CD4-positive, alpha-beta T cell (primary cell): ENCODE measurements at regions of chr5 and their contacts with region 1.

Region 1: DNA sequence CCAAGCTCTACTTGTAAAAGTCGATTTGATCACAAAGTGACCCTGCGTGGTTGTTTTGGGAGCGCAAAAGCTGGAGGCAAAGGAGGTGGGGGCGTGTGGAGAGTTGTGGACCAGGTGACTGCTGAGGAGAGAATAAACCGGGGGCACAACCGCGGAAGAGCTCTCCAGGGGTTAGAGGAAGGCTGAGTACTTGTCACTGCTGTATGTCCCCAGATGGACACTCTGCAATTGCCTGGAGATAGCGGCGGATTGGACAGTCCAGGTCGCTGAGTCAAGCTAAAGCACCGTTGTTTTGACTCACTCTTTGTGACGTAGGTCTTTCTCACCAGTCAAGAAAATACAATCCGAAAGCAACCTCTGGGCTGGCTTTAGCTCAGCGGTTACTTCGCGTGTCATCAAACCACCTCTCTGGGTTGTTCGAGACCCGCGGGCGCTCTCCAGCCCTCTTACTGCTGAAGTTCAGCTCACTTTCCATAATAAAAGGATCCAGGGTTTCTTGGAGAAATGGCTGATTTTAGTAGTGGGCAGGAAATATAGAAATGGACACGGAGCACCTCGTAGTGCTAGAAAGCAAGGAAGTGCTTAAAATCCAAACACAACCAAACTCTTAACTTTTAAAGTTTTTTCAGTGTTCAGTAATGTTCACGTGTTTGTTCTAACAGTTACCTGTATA is 25.7 kb downstream of the ZMAT2 start:
- DNase-seq: peak; percentile 25 to 83 (median 49)
- ATAC-seq: peak; percentile 91
- H3K4me3 ChIP-seq: peak overlapping the region; percentile 17
- H3K4me3 Mint-ChIP-seq: peak overlapping the region; percentile 83
- H3K27ac ChIP-seq: no peak overlapping the region
- H3K27ac Mint-ChIP-seq: peak overlapping the region; percentile 89
- H3K4me1 ChIP-seq: peaks cover 7% of the 10 kb centered on the region
- H3K4me1 Mint-ChIP-seq: peaks cover 16% of the 10 kb centered on the region
- H3K27me3 ChIP-seq: peaks cover 0 to 6% of the 10 kb centered on the region in 2 experiments
- H3K27me3 Mint-ChIP-seq: peaks cover 42% of the 10 kb centered on the region
- CTCF ChIP-seq: no peak

Region 2: DNA sequence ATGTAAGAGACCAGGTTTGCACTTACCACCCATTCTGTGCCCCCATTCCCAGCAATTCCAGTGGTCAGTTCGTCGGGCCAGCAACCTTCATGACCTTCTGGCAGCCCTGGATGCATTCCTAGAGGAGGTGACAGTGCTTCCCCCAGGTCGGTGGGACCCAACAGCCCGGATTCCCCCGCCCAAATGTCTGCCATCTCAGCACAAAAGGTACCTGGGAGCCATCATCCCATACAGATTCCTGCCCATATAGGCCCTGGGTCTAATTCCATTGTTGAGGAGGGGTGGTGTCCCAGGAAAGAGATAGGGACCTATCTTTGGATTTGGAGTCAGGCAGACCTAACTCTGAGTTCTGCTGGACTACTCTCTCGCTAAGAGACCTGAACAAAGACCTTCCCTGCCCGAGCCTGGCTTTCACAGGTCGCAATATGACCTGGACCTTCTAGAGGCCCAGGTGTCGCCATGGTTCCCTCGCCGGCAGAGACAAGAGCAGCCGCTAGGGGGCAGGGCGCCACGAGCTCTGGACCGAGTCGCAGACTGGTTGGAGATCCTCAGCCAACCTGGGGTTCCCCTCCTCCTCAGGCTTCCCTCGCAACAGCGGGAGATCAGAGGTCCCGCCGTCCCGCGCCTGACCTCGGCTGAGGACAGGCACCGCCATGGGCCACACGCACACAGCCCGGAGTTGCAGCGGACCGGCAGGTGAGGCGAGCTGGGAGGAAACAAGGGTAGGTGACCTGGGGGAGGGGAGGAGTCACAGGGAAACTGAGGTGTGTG is 362.9 kb before region 1 on chr5:
- CTCF ChIA-PET with region 1: interaction called, 4 read pairs
- POLR2A ChIA-PET with region 1: no interaction called
- intact Hi-C with region 1: loop called in 1 of 2 experiments (anchors 2 kb)
- DNase-seq: peak; percentile 69 to 89 (median 78)
- ATAC-seq: peak; percentile 97
- H3K4me3 ChIP-seq: peak overlapping the region; percentile 36
- H3K4me3 Mint-ChIP-seq: peak overlapping the region; percentile 63
- H3K27ac ChIP-seq: no peak overlapping the region
- H3K27ac Mint-ChIP-seq: no peak overlapping the region
- H3K4me1 ChIP-seq: peaks cover 12% of the 10 kb centered on the region
- H3K4me1 Mint-ChIP-seq: peaks cover 6% of the 10 kb centered on the region
- H3K27me3 ChIP-seq: no peaks in the 10 kb centered on the region
- H3K27me3 Mint-ChIP-seq: no peaks in the 10 kb centered on the region
- CTCF ChIP-seq: peak; percentile 93

Region 3: GRCh38 chr5:140372971-140373487 is 352.9 kb before region 1 on chr5:
- CTCF ChIA-PET with region 1: no interaction called
- POLR2A ChIA-PET with region 1: no interaction called
- intact Hi-C with region 1: loop called in 1 of 2 experiments (anchors 2 kb)
- DNase-seq: peak in 11 of 14 experiments; percentile 10 to 65 (median 22)
- ATAC-seq: peak; percentile 66
- H3K4me3 ChIP-seq: no peak overlapping the region
- H3K4me3 Mint-ChIP-seq: no peak overlapping the region
- H3K27ac ChIP-seq: no peak overlapping the region
- H3K27ac Mint-ChIP-seq: no peak overlapping the region
- H3K4me1 ChIP-seq: peaks cover 5% of the 10 kb centered on the region
- H3K4me1 Mint-ChIP-seq: no peaks in the 10 kb centered on the region
- H3K27me3 ChIP-seq: no peaks in the 10 kb centered on the region
- H3K27me3 Mint-ChIP-seq: no peaks in the 10 kb centered on the region
- CTCF ChIP-seq: peak; percentile 83

Region 4: GRCh38 chr5:140481758-140482157 is 244.2 kb before region 1 on chr5:
- CTCF ChIA-PET with region 1: no interaction called
- POLR2A ChIA-PET with region 1: no interaction called
- intact Hi-C with region 1: loop called in 1 of 2 experiments (anchors 10 kb)
- DNase-seq: no peak
- ATAC-seq: no peak
- H3K4me3 ChIP-seq: no peak overlapping the region
- H3K4me3 Mint-ChIP-seq: no peak overlapping the region
- H3K27ac ChIP-seq: no peak overlapping the region
- H3K27ac Mint-ChIP-seq: no peak overlapping the region
- H3K4me1 ChIP-seq: no peaks in the 10 kb centered on the region
- H3K4me1 Mint-ChIP-seq: peaks cover 5% of the 10 kb centered on the region
- H3K27me3 ChIP-seq: no peaks in the 10 kb centered on the region
- H3K27me3 Mint-ChIP-seq: no peaks in the 10 kb centered on the region
- CTCF ChIP-seq: no peak

Region 5: GRCh38 chr5:141208478-141208877 is 482.5 kb after region 1 on chr5 and contains the start of gene PCDHB12:
- CTCF ChIA-PET with region 1: no interaction called
- POLR2A ChIA-PET with region 1: no interaction called
- intact Hi-C with region 1: no loop called
- DNase-seq: peak in 1 of 14 experiments; percentile 3
- ATAC-seq: no peak
- H3K4me3 ChIP-seq: no peak within 1 kb of the TSS
- H3K4me3 Mint-ChIP-seq: no peak within 1 kb of the TSS
- H3K27ac ChIP-seq: no peak within 1 kb of the TSS
- H3K27ac Mint-ChIP-seq: no peak within 1 kb of the TSS
- H3K4me1 ChIP-seq: no peaks in the 10 kb centered on the region
- H3K4me1 Mint-ChIP-seq: no peaks in the 10 kb centered on the region
- H3K27me3 ChIP-seq: peaks cover 11 to 53% of the 10 kb centered on the region in 2 experiments
- H3K27me3 Mint-ChIP-seq: peaks cover 89% of the 10 kb centered on the region
- CTCF ChIP-seq: no peak
- total RNA-seq, gene PCDHB12: not detected